ENCODE measurements at regions of chr16 and their contacts with region 1.

Region 1: DNA sequence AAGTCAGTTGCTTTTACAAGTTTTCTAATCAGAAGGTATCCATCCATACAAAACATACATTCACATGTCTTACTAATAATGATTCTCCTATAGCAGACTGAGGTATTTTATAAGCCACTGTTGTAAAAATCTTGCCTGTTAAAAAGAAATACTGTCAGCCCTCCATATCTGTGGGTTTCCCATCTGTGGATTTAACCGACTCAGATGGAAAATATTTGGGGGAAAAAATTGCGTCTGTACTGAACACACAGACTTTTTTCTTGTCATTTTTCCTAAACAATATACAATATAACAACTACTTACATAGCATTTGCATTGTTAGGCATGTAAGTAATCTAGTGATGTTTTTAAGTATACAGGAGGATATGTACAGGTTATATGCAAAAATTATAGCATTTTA is 90.4 kb downstream of the PARN start:
- DNase-seq: no peak
- ATAC-seq: no peak
- H3K4me3 ChIP-seq: no peak overlapping the region
- H3K27ac ChIP-seq: no peak overlapping the region
- H3K4me1 ChIP-seq: no peaks in the 10 kb centered on the region
- H3K27me3 ChIP-seq: no peaks in the 10 kb centered on the region
- CTCF ChIP-seq: no peak

Region 2: DNA sequence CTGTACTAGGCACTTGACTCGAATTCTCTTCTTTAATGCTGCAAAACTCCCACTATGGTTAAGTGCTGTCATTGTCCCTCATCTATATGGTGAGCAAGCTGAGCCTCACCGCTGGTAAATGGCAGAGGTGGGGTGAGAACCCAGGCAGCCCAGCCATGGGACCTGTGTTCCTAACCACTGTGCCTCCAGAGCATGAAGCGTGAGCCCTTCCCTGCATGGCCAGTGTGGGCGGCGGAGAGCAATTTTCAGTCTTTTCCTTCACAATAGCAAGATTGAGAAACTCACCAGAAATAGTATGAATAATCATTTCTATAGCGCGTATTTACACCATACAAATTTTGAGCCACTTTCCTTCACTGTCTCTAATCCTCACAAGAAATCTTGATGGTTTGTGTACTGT is 102.3 kb after region 1 on chr16:
- CTCF ChIA-PET with region 1: no interaction called
- POLR2A ChIA-PET with region 1: interaction called, 10 read pairs
- in situ Hi-C with region 1: no loop called
- intact Hi-C with region 1: no loop called
- DNase-seq: no peak
- ATAC-seq: peak; percentile 37; the same call in 1 of the 2 replicates
- H3K4me3 ChIP-seq: no peak overlapping the region
- H3K27ac ChIP-seq: no peak overlapping the region
- H3K4me1 ChIP-seq: 0 out of 2 replicates have a peak, but pooled peaks cover 3% of the 10 kb centered on the region
- H3K27me3 ChIP-seq: no peaks in the 10 kb centered on the region
- CTCF ChIP-seq: no peak

Measured in Panc1 (cell line).